Activated T-helper 1 cell treated with anti-CD3 and anti-CD28 coated beads, Interleukin-12 subunit alpha, Interleukin-12 subunit beta, Interleukin-2, Interleukin-4 antibody, amounts not matched to agents 30 ng/mL and 10 ng/mL and 1 ng/mL, durations not matched to agents 14 hours and 24 hours and 36 hours (primary cell): ENCODE measurements at regions of chr15 and their contacts with region 1.

Region 1: GRCh38 chr15:101159096-101159935 is 92.5 kb downstream of the CHSY1 start:
- DNase-seq: peak; percentile 47
- H3K4me3 Mint-ChIP-seq: peak overlapping the region; percentile 43
- H3K27ac Mint-ChIP-seq: peak overlapping the region; percentile 94
- H3K4me1 Mint-ChIP-seq: peaks cover 48% of the 10 kb centered on the region
- H3K27me3 Mint-ChIP-seq: no peaks in the 10 kb centered on the region

Region 2: GRCh38 chr15:101099183-101099582 is 60.1 kb before region 1 on chr15:
- intact Hi-C with region 1: loop called (anchors 2 kb)
- DNase-seq: no peak
- H3K4me3 Mint-ChIP-seq: no peak overlapping the region
- H3K27ac Mint-ChIP-seq: no peak overlapping the region
- H3K4me1 Mint-ChIP-seq: peaks cover 8% of the 10 kb centered on the region
- H3K27me3 Mint-ChIP-seq: peaks cover 2% of the 10 kb centered on the region

Region 3: GRCh38 chr15:101135532-101136166 is 23.7 kb before region 1 on chr15:
- intact Hi-C with region 1: loop called (anchors 2 kb)
- DNase-seq: no peak
- H3K4me3 Mint-ChIP-seq: peak overlapping the region; percentile 9
- H3K27ac Mint-ChIP-seq: peak overlapping the region; percentile 46
- H3K4me1 Mint-ChIP-seq: peaks cover 41% of the 10 kb centered on the region
- H3K27me3 Mint-ChIP-seq: no peaks in the 10 kb centered on the region

Region 4: DNA sequence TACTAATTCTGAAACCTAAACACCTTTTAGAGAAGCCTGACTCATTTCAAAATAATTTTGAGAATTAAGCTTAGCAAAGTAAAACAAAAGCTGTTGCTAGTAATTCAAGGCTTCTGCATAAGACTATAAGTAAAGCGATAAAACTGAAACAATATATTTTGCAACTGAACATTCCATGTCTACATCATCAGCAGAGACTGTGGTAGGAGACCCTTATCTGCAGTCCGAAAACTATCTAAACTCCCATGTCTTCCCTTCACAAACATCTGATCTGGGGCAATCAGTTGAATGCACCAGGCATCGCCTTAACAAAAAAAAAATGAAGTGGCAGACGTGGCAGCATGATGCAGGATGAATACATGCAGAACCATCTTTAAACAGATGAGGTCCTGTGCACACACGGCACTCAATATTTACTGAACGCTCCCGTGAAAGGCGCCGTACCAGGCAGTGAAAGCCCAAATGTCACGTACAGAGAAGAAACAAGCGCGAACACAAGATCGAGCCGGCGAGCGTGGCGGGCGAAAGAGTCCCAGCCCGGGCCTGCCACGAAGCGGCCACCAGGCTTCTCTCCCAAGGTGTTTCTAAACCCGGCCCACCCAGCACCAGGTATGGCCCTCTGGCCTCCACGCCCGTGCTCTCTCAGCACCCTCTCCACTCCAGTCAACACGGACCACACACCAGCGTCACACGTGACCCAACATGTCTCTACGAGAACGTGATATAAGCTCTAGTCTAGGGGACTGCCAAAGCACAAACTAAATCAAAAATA is 29.5 kb after region 1 on chr15:
- intact Hi-C with region 1: loop called (anchors 1 kb)
- DNase-seq: no peak
- H3K4me3 Mint-ChIP-seq: peak overlapping the region; percentile 41
- H3K27ac Mint-ChIP-seq: peak overlapping the region; percentile 94
- H3K4me1 Mint-ChIP-seq: peaks cover 87% of the 10 kb centered on the region
- H3K27me3 Mint-ChIP-seq: no peaks in the 10 kb centered on the region

Region 5: GRCh38 chr15:101206176-101206591 is 46.9 kb after region 1 on chr15:
- intact Hi-C with region 1: loop called (anchors 1 kb)
- DNase-seq: peak; percentile 68
- H3K4me3 Mint-ChIP-seq: peak overlapping the region; percentile 86
- H3K27ac Mint-ChIP-seq: peak overlapping the region; percentile 97
- H3K4me1 Mint-ChIP-seq: peaks cover 89% of the 10 kb centered on the region
- H3K27me3 Mint-ChIP-seq: no peaks in the 10 kb centered on the region